ENCODE measurements at regions of chr14 and their contacts with region 1.

Region 1: GRCh38 chr14:93112891-93113677 is 2.6 kb downstream of the ITPK1 start:
- DNase-seq: peak; percentile 47 to 80 (median 52)
- ATAC-seq: peak; percentile 69
- H3K4me3 ChIP-seq: no peak overlapping the region
- H3K27ac ChIP-seq: peak overlapping the region; percentile 57; the same call in 1 of the 3 replicates
- H3K4me1 ChIP-seq: peaks cover 13 to 29% of the 10 kb centered on the region in 2 experiments; a peak in 4 of 5 replicates
- H3K27me3 ChIP-seq: no peaks in the 10 kb centered on the region
- CTCF ChIP-seq: peak; percentile 64 to 73 (median 66)
- EP300 ChIP-seq: no peak
- POLR2A ChIP-seq: no peak
- RAD21 ChIP-seq: peak; percentile 28 to 63

Region 2: GRCh38 chr14:92951912-92952471 is 161.1 kb before region 1 on chr14:
- CTCF ChIA-PET with region 1: interaction called, 3 read pairs
- POLR2A ChIA-PET with region 1: no interaction called
- in situ Hi-C with region 1: no loop called
- intact Hi-C with region 1: loop called (anchors 1 kb)
- DNase-seq: peak; percentile 69 to 77 (median 74)
- ATAC-seq: peak; percentile 98
- H3K4me3 ChIP-seq: no peak overlapping the region
- H3K27ac ChIP-seq: no peak overlapping the region
- H3K4me1 ChIP-seq: peaks cover 0 to 5% of the 10 kb centered on the region in 2 experiments; a peak in 2 of 5 replicates
- H3K27me3 ChIP-seq: no peaks in the 10 kb centered on the region
- CTCF ChIP-seq: peak; percentile 79 to 81 (median 79)
- EP300 ChIP-seq: no peak
- POLR2A ChIP-seq: no peak
- RAD21 ChIP-seq: peak; percentile 79 to 86

Region 3: DNA sequence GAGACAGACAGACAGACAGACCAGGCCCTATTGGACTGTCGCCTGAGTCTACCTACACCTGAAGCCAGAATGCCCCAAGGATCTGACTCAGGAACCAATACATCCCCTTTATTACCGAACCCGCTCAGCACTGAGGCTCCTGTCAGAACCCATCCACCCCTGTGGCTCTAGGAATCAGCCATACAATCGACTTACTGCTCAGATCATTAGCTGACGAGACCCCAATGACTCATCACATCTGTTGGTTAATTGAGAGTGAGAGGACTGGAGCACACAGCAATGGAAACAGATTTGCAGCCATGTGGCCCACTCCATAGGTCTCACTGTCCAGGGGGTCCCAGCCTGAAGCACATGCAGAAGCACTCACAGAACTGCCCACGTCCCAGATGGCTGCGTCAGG is 12.5 kb before region 1 on chr14:
- CTCF ChIA-PET with region 1: interaction called, 3 read pairs
- POLR2A ChIA-PET with region 1: interaction called, 11 read pairs
- in situ Hi-C with region 1: no loop called
- intact Hi-C with region 1: no loop called
- DNase-seq: no peak
- ATAC-seq: no peak; the same call in 2 of the 3 replicates
- H3K4me3 ChIP-seq: no peak overlapping the region
- H3K27ac ChIP-seq: no peak overlapping the region
- H3K4me1 ChIP-seq: peaks cover 0 to 8% of the 10 kb centered on the region in 2 experiments; a peak in 2 of 5 replicates
- H3K27me3 ChIP-seq: no peaks in the 10 kb centered on the region
- CTCF ChIP-seq: no peak
- EP300 ChIP-seq: no peak
- POLR2A ChIP-seq: no peak
- RAD21 ChIP-seq: no peak

Region 4: GRCh38 chr14:93137864-93138263 is 24.8 kb after region 1 on chr14:
- CTCF ChIA-PET with region 1: interaction called, 22 read pairs
- POLR2A ChIA-PET with region 1: interaction called, 4 read pairs
- in situ Hi-C with region 1: no loop called
- intact Hi-C with region 1: loop called (anchors 1 kb)
- DNase-seq: peak; percentile 38 to 66 (median 46)
- ATAC-seq: peak; percentile 94
- H3K4me3 ChIP-seq: no peak overlapping the region
- H3K27ac ChIP-seq: no peak overlapping the region
- H3K4me1 ChIP-seq: peaks cover 3 to 7% of the 10 kb centered on the region in 2 experiments; a peak in 3 of 5 replicates
- H3K27me3 ChIP-seq: peaks cover 0 to 1% of the 10 kb centered on the region in 2 experiments; a peak in 1 of 5 replicates
- CTCF ChIP-seq: peak; percentile 22 to 50 (median 40); a peak in 4 of 6 replicates
- EP300 ChIP-seq: no peak
- POLR2A ChIP-seq: no peak
- RAD21 ChIP-seq: peak in 1 of 2 experiments; percentile 52; a peak in 2 of 4 replicates

Region 5: GRCh38 chr14:93153121-93153520 is 40.0 kb after region 1 on chr14:
- CTCF ChIA-PET with region 1: no interaction called
- POLR2A ChIA-PET with region 1: no interaction called
- in situ Hi-C with region 1: no loop called
- intact Hi-C with region 1: no loop called
- DNase-seq: no peak
- ATAC-seq: no peak
- H3K4me3 ChIP-seq: no peak overlapping the region
- H3K27ac ChIP-seq: no peak overlapping the region
- H3K4me1 ChIP-seq: no peaks in the 10 kb centered on the region
- H3K27me3 ChIP-seq: peaks cover 0 to 6% of the 10 kb centered on the region in 2 experiments; a peak in 1 of 5 replicates
- CTCF ChIP-seq: no peak
- EP300 ChIP-seq: no peak
- POLR2A ChIP-seq: no peak
- RAD21 ChIP-seq: no peak

Region 6: DNA sequence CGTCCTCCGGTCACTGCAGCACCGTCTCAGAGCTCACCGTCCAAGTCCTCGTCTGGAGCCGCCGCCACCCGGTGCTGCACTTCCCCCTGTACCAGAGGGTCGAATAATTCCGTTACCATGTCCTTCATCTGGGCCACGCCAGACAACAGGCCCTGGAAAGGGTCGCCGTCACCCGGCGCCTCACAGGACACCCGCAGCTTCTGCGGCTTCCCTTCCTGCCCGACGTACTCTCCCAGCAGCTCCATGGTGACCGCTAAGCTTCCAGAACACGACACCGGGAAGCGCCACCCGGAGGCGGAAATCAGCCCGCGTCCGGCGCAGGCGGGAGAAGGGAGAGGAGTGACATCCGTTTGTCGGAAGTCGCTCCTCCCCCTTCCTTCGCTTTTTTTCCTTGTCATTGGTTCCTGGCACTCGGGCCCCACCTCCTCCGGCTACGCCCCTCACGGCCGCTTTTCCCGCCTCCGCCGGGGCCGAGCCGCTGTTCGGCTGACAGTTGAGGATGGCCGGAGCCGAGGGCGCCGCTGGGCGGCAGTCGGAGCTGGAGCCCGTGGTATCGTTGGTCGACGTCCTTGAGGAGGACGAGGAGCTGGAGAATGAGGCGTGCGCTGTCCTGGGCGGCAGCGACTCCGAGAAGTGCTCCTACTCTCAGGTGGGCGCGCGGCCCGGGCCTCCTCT is 93.8 kb after region 1 on chr14 and contains the starts of genes GON7 and UBR7:
- CTCF ChIA-PET with region 1: interaction called, 4 read pairs
- POLR2A ChIA-PET with region 1: interaction called, 3 read pairs
- in situ Hi-C with region 1: no loop called
- intact Hi-C with region 1: loop called (anchors 5 kb)
- DNase-seq: peak; percentile 84 to 96 (median 87)
- ATAC-seq: peak; percentile 92
- H3K4me3 ChIP-seq: peak within 1 kb of the TSS; percentile 87
- H3K27ac ChIP-seq: peak within 1 kb of the TSS; percentile 86
- H3K4me1 ChIP-seq: peaks cover 7 to 12% of the 10 kb centered on the region in 2 experiments; a peak in 3 of 5 replicates
- H3K27me3 ChIP-seq: no peaks in the 10 kb centered on the region
- CTCF ChIP-seq: peak in 2 of 3 experiments; percentile 14 to 17; a peak in 2 of 6 replicates
- EP300 ChIP-seq: no peak
- POLR2A ChIP-seq: peak; percentile 85
- RAD21 ChIP-seq: no peak
- polyA plus RNA-seq, gene GON7: 23.9 to 26.9 TPM
- polyA plus RNA-seq, gene UBR7: 12.5 to 20.0 TPM